Right cardiac atrium (tissue), 5 donors: ENCODE measurements at regions of chr9 and their contacts with region 1.

Region 1: GRCh38 chr9:14428781-14429230 is 114.9 kb upstream of the NFIB start:
- DNase-seq: peak; percentile 77 to 85 (median 84)
- ATAC-seq: peak; percentile 73 to 76
- H3K4me3 ChIP-seq: no peak overlapping the region
- H3K27ac ChIP-seq: no peak overlapping the region
- H3K4me1 ChIP-seq: peaks cover 3% of the 10 kb centered on the region
- H3K27me3 ChIP-seq: no peaks in the 10 kb centered on the region

Region 2: GRCh38 chr9:13351778-13352386 is 1076.9 kb before region 1 on chr9:
- intact Hi-C with region 1: loop called in 1 of 4 experiments (anchors 10 kb)
- DNase-seq: no peak
- ATAC-seq: peak; percentile 39 to 43
- H3K4me3 ChIP-seq: no peak overlapping the region
- H3K27ac ChIP-seq: no peak overlapping the region
- H3K4me1 ChIP-seq: no peaks in the 10 kb centered on the region
- H3K27me3 ChIP-seq: no peaks in the 10 kb centered on the region

Region 3: GRCh38 chr9:13744261-13744901 is 684.4 kb before region 1 on chr9:
- intact Hi-C with region 1: no loop called
- DNase-seq: no peak
- ATAC-seq: no peak
- H3K4me3 ChIP-seq: no peak overlapping the region
- H3K27ac ChIP-seq: no peak overlapping the region
- H3K4me1 ChIP-seq: no peaks in the 10 kb centered on the region
- H3K27me3 ChIP-seq: no peaks in the 10 kb centered on the region